ENCODE measurements at regions of chr20 and their contacts with region 1.

Region 1: GRCh38 chr20:8722276-8722928 is 346.5 kb upstream of the PLCB4 start:
- DNase-seq: peak in 4 of 14 experiments; percentile 25 to 70 (median 63)
- ATAC-seq: no peak
- H3K4me3 ChIP-seq: no peak overlapping the region
- H3K4me3 Mint-ChIP-seq: no peak overlapping the region
- H3K27ac ChIP-seq: no peak overlapping the region
- H3K27ac Mint-ChIP-seq: no peak overlapping the region
- H3K4me1 ChIP-seq: no peaks in the 10 kb centered on the region
- H3K4me1 Mint-ChIP-seq: no peaks in the 10 kb centered on the region
- H3K27me3 ChIP-seq: no peaks in the 10 kb centered on the region
- H3K27me3 Mint-ChIP-seq: no peaks in the 10 kb centered on the region
- CTCF ChIP-seq: peak; percentile 67

Region 2: GRCh38 chr20:6767536-6768227 is 1954.7 kb before region 1 on chr20 and contains the start of gene BMP2:
- CTCF ChIA-PET with region 1: no interaction called
- POLR2A ChIA-PET with region 1: no interaction called
- intact Hi-C with region 1: loop called in 1 of 2 experiments (anchors 10 kb)
- DNase-seq: peak in 1 of 14 experiments; percentile 4
- ATAC-seq: no peak
- H3K4me3 ChIP-seq: no peak within 1 kb of the TSS
- H3K4me3 Mint-ChIP-seq: no peak within 1 kb of the TSS
- H3K27ac ChIP-seq: no peak within 1 kb of the TSS
- H3K27ac Mint-ChIP-seq: no peak within 1 kb of the TSS
- H3K4me1 ChIP-seq: peaks cover 2% of the 10 kb centered on the region
- H3K4me1 Mint-ChIP-seq: no peaks in the 10 kb centered on the region
- H3K27me3 ChIP-seq: peaks cover 29 to 47% of the 10 kb centered on the region in 2 experiments
- H3K27me3 Mint-ChIP-seq: peaks cover 71% of the 10 kb centered on the region
- CTCF ChIP-seq: no peak
- total RNA-seq, gene BMP2: not detected

Region 3: GRCh38 chr20:6828794-6829423 is 1893.5 kb before region 1 on chr20:
- CTCF ChIA-PET with region 1: no interaction called
- POLR2A ChIA-PET with region 1: no interaction called
- intact Hi-C with region 1: loop called (anchors 2 to 5 kb)
- DNase-seq: peak in 4 of 14 experiments; percentile 5 to 38 (median 19)
- ATAC-seq: no peak
- H3K4me3 ChIP-seq: no peak overlapping the region
- H3K4me3 Mint-ChIP-seq: no peak overlapping the region
- H3K27ac ChIP-seq: no peak overlapping the region
- H3K27ac Mint-ChIP-seq: no peak overlapping the region
- H3K4me1 ChIP-seq: no peaks in the 10 kb centered on the region
- H3K4me1 Mint-ChIP-seq: no peaks in the 10 kb centered on the region
- H3K27me3 ChIP-seq: no peaks in the 10 kb centered on the region
- H3K27me3 Mint-ChIP-seq: no peaks in the 10 kb centered on the region
- CTCF ChIP-seq: peak; percentile 20

Region 4: GRCh38 chr20:7935027-7935551 is 787.3 kb before region 1 on chr20:
- CTCF ChIA-PET with region 1: interaction called, 31 read pairs
- POLR2A ChIA-PET with region 1: interaction called, 3 read pairs
- intact Hi-C with region 1: loop called in 1 of 2 experiments (anchors 1 kb)
- DNase-seq: no peak
- ATAC-seq: no peak
- H3K4me3 ChIP-seq: no peak overlapping the region
- H3K4me3 Mint-ChIP-seq: no peak overlapping the region
- H3K27ac ChIP-seq: no peak overlapping the region
- H3K27ac Mint-ChIP-seq: no peak overlapping the region
- H3K4me1 ChIP-seq: no peaks in the 10 kb centered on the region
- H3K4me1 Mint-ChIP-seq: no peaks in the 10 kb centered on the region
- H3K27me3 ChIP-seq: peaks cover 0 to 9% of the 10 kb centered on the region in 2 experiments
- H3K27me3 Mint-ChIP-seq: peaks cover 36% of the 10 kb centered on the region
- CTCF ChIP-seq: no peak

Region 5: GRCh38 chr20:7980332-7981046 is 741.9 kb before region 1 on chr20:
- CTCF ChIA-PET with region 1: no interaction called
- POLR2A ChIA-PET with region 1: no interaction called
- intact Hi-C with region 1: loop called in 1 of 2 experiments (anchors 2 kb)
- DNase-seq: peak in 3 of 14 experiments; percentile 20 to 23 (median 23)
- ATAC-seq: no peak
- H3K4me3 ChIP-seq: no peak overlapping the region
- H3K4me3 Mint-ChIP-seq: no peak overlapping the region
- H3K27ac ChIP-seq: no peak overlapping the region
- H3K27ac Mint-ChIP-seq: no peak overlapping the region
- H3K4me1 ChIP-seq: no peaks in the 10 kb centered on the region
- H3K4me1 Mint-ChIP-seq: peaks cover 15% of the 10 kb centered on the region
- H3K27me3 ChIP-seq: no peaks in the 10 kb centered on the region
- H3K27me3 Mint-ChIP-seq: no peaks in the 10 kb centered on the region
- CTCF ChIP-seq: peak; percentile 16

Region 6: GRCh38 chr20:8043687-8044282 is 678.6 kb before region 1 on chr20:
- CTCF ChIA-PET with region 1: interaction called, 35 read pairs
- POLR2A ChIA-PET with region 1: interaction called, 4 read pairs
- intact Hi-C with region 1: loop called (anchors 1 to 2 kb)
- DNase-seq: peak in 4 of 14 experiments; percentile 39 to 82 (median 79)
- ATAC-seq: peak; percentile 85
- H3K4me3 ChIP-seq: no peak overlapping the region
- H3K4me3 Mint-ChIP-seq: no peak overlapping the region
- H3K27ac ChIP-seq: no peak overlapping the region
- H3K27ac Mint-ChIP-seq: no peak overlapping the region
- H3K4me1 ChIP-seq: no peaks in the 10 kb centered on the region
- H3K4me1 Mint-ChIP-seq: peaks cover 4% of the 10 kb centered on the region
- H3K27me3 ChIP-seq: peaks cover 0 to 7% of the 10 kb centered on the region in 2 experiments
- H3K27me3 Mint-ChIP-seq: peaks cover 9% of the 10 kb centered on the region
- CTCF ChIP-seq: peak; percentile 84

Region 7: DNA sequence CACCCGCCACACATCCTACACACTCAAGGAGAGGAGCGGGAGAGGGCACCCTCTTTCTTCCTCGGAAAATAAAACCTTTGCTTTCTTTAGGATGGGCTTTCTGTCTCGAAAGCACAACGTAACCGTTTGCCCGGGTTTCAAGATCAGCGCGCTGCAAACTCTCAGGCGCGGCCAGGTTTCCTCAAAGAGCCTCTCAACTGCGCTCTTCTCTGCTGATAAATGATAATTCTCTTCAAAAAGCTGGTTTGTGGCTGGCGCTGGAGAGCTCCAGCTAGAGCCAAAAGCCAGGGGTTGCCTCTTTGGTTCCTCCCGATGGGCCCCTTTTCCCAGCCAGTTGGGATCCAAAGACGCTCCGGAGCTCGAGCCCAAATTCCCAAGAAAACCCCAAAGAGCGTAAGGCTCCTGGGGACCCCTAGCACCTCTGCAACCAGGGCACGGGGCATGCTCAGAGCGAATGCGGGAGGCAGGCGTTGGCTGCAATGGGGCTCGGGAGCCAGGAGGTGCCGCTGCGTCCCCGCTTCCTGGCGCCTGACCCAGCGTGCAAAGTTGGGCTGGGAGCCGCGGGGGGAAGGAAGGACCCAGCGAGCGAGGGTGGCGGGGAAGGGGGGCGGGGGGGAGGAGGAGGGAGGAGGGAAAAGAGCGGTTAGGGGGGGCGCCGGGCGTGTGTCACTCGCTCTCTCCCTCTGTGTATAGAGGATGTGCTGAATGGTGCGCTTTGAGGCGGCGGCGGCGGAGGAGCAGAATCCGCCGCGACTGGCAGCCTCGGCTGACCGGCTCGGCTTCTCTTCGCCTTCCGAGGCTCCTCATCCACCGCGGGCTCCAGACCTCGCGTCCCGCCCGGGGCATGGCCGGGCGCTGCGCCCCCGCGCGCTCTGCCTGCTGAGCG is 590.6 kb before region 1 on chr20 and contains the start of gene PLCB1:
- CTCF ChIA-PET with region 1: no interaction called
- POLR2A ChIA-PET with region 1: no interaction called
- intact Hi-C with region 1: loop called (anchors 5 kb)
- DNase-seq: peak; percentile 54 to 91 (median 68)
- ATAC-seq: peak; percentile 91
- H3K4me3 ChIP-seq: peak within 1 kb of the TSS; percentile 64
- H3K4me3 Mint-ChIP-seq: peak within 1 kb of the TSS; percentile 87
- H3K27ac ChIP-seq: no peak within 1 kb of the TSS
- H3K27ac Mint-ChIP-seq: peak within 1 kb of the TSS; percentile 45
- H3K4me1 ChIP-seq: peaks cover 14% of the 10 kb centered on the region
- H3K4me1 Mint-ChIP-seq: peaks cover 30% of the 10 kb centered on the region
- H3K27me3 ChIP-seq: peaks cover 0 to 6% of the 10 kb centered on the region in 2 experiments
- H3K27me3 Mint-ChIP-seq: peaks cover 42% of the 10 kb centered on the region
- CTCF ChIP-seq: peak; percentile 70
- total RNA-seq, gene PLCB1: 3.8 to 5.6 TPM